CD4-positive, alpha-beta memory T cell (primary cell): ENCODE measurements at regions of chr3 and their contacts with region 1.

Region 1: GRCh38 chr3:45037734-45038455 is 11.8 kb downstream of the CLEC3B start:
- DNase-seq: peak; percentile 88 to 93 (median 91)
- H3K4me3 ChIP-seq: no peak overlapping the region
- H3K4me3 Mint-ChIP-seq: peak overlapping the region in 6 of 8 donors; percentile 54 to 86 (median 78)
- H3K27ac ChIP-seq: no peak overlapping the region
- H3K27ac Mint-ChIP-seq: peak overlapping the region in 3 of 7 donors; percentile 51 to 78 (median 72)
- H3K4me1 ChIP-seq: peaks cover 32% of the 10 kb centered on the region
- H3K4me1 Mint-ChIP-seq: peaks cover 24 to 66% (median 43%) of the 10 kb centered on the region in 4 donors
- H3K27me3 ChIP-seq: no peaks in the 10 kb centered on the region
- H3K27me3 Mint-ChIP-seq: peaks cover 10 to 34% of the 10 kb centered on the region in 2 donors

Region 2: DNA sequence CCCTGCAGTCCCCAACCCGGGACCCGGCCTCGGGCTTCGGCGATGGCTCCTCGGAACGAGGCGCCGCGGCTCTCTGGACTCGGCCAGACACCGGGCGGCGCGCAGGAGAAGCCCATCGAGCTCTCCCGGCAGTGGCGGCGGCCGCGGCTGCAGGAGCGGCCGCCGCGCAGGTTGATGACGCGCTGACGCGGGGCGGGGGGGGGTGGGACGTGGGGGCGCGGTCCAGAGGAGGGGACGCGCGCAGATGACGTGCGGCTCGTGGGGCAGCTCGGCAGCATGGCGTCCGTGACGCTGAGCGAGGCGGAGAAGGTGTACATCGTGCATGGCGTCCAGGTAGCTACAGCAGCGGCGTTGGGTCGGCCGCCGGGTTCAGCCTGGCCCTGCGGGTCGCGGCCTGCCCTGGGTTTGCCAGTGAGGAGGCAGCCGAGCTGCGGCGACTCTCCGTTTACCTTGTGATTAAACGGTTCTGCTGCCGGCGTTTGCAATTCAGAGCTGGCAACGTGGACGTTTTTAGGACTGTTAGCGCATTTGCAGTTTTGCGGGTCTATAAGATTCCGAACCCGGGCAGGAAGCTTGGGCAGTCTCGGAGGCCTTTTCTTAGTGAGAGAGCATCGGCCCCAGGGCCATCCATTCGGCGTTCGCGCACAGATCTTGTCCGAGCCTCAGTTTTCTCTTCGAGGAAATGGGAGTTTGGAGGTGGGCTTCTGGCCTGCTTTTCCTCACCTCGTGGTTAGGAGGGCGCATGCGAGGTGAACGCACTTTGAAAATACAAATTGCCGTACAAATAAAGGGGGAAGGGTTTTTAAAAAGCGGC is 61.7 kb before region 1 on chr3 and contains the starts of genes EXOSC7 and ZDHHC3:
- CTCF ChIA-PET with region 1: interaction called, 14 read pairs
- POLR2A ChIA-PET with region 1: interaction called, 20 read pairs
- intact Hi-C with region 1: loop called (anchors 5 kb)
- DNase-seq: peak; percentile 81 to 89 (median 88)
- H3K4me3 ChIP-seq: peak within 1 kb of the TSS; percentile 85 to 94
- H3K4me3 Mint-ChIP-seq: peak within 1 kb of the TSS; percentile 93 to 97 (median 95)
- H3K27ac ChIP-seq: peak within 1 kb of the TSS; percentile 91
- H3K27ac Mint-ChIP-seq: peak within 1 kb of the TSS; percentile 95 to 97 (median 96)
- H3K4me1 ChIP-seq: peaks cover 55% of the 10 kb centered on the region
- H3K4me1 Mint-ChIP-seq: peaks cover 42 to 75% (median 60%) of the 10 kb centered on the region in 4 donors
- H3K27me3 ChIP-seq: no peaks in the 10 kb centered on the region
- H3K27me3 Mint-ChIP-seq: no peaks in the 10 kb centered on the region
- total RNA-seq, gene EXOSC7: 44.6 to 45.3 TPM
- total RNA-seq, gene ZDHHC3: 40.1 to 41.9 TPM

Region 3: DNA sequence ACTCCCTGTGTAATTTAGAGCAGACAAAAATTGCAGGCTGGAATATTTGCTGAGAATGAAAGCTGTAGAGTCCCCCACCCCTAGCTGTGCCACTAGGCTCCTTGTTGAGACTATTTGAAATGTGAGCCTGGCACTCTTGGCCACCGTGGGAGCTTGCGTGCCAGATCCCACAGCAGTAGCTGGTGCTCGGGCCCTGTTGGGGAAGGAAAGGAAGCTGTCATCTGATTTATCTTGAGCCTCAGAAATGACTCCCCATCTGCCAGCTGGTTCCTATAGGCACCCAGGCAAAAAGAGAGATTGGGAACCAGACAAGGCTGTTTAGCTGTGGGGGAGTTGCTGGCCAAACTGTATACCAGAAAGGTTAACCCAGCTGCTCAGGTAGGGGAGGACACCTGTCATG is 35.2 kb before region 1 on chr3:
- CTCF ChIA-PET with region 1: interaction called, 20 read pairs
- POLR2A ChIA-PET with region 1: interaction called, 10 read pairs
- intact Hi-C with region 1: no loop called
- DNase-seq: no peak
- H3K4me3 ChIP-seq: no peak overlapping the region
- H3K4me3 Mint-ChIP-seq: no peak overlapping the region
- H3K27ac ChIP-seq: no peak overlapping the region
- H3K27ac Mint-ChIP-seq: peak overlapping the region; percentile 23 to 82 (median 73)
- H3K4me1 ChIP-seq: peaks cover 21% of the 10 kb centered on the region
- H3K4me1 Mint-ChIP-seq: peaks cover 19 to 45% (median 28%) of the 10 kb centered on the region in 4 donors
- H3K27me3 ChIP-seq: no peaks in the 10 kb centered on the region
- H3K27me3 Mint-ChIP-seq: no peaks in the 10 kb centered on the region

Region 4: DNA sequence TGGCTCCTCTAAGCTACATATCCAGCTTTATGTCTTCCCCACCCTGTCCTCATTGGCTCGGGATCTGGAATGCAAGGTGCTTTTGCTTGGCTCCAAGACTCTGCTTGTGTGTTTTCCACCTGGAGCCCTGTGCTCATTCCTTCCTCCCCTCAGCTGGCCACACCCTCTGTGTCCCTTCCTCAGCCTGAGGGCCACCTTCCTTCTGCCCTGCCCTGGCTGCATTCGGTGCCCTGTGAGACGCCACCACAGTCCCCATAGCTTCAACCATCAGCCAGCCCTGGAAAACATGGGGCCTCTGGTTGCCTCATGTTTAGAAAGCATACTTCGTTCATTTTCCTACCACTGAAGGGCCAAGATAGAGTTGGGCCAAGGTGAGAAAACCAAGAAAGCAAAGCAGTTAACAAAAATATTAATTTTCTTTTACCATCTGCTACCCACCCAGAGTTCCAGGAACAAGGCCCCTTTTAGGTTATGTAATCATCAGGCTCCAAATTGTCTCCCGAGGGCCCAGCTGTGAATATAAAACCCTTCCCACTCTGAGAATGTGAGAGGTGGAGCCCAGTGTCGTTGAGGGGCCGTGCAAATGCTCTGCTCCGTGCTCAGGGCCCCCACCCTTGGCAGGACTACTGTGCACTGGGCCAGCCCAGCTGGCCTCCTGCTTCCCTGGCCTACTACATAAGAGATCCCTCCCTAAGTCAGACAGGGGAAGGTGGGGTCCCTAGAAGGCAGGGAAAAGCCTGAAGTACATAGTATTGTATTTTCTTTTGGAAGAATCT is 16.6 kb before region 1 on chr3:
- CTCF ChIA-PET with region 1: interaction called, 16 read pairs
- POLR2A ChIA-PET with region 1: interaction called, 8 read pairs
- intact Hi-C with region 1: no loop called
- DNase-seq: no peak
- H3K4me3 ChIP-seq: no peak overlapping the region
- H3K4me3 Mint-ChIP-seq: peak overlapping the region in 3 of 8 donors; percentile 10 to 54 (median 28)
- H3K27ac ChIP-seq: no peak overlapping the region
- H3K27ac Mint-ChIP-seq: peak overlapping the region in 6 of 7 donors; percentile 50 to 89 (median 84)
- H3K4me1 ChIP-seq: peaks cover 16% of the 10 kb centered on the region
- H3K4me1 Mint-ChIP-seq: peaks cover 13 to 31% (median 21%) of the 10 kb centered on the region in 4 donors
- H3K27me3 ChIP-seq: no peaks in the 10 kb centered on the region
- H3K27me3 Mint-ChIP-seq: no peaks in the 10 kb centered on the region

Region 5: GRCh38 chr3:45210308-45211041 is 172.6 kb after region 1 on chr3:
- CTCF ChIA-PET with region 1: interaction called, 688 read pairs
- POLR2A ChIA-PET with region 1: interaction called, 40 read pairs
- intact Hi-C with region 1: loop called (anchors 1 kb)
- DNase-seq: peak; percentile 73 to 82 (median 76)
- H3K4me3 ChIP-seq: no peak overlapping the region
- H3K4me3 Mint-ChIP-seq: peak overlapping the region in 2 of 8 donors; percentile 21 to 29
- H3K27ac ChIP-seq: no peak overlapping the region
- H3K27ac Mint-ChIP-seq: peak overlapping the region in 2 of 7 donors; percentile 6 to 77
- H3K4me1 ChIP-seq: peaks cover 22% of the 10 kb centered on the region
- H3K4me1 Mint-ChIP-seq: peaks cover 9 to 28% (median 20%) of the 10 kb centered on the region in 4 donors
- H3K27me3 ChIP-seq: peaks cover 5% of the 10 kb centered on the region
- H3K27me3 Mint-ChIP-seq: peaks cover 0 to 9% of the 10 kb centered on the region in 2 donors

Region 6: GRCh38 chr3:45499529-45499928 is 461.6 kb after region 1 on chr3:
- CTCF ChIA-PET with region 1: interaction called, 19 read pairs
- POLR2A ChIA-PET with region 1: no interaction called
- intact Hi-C with region 1: loop called (anchors 1 kb)
- DNase-seq: peak in 1 of 5 donors; percentile 17
- H3K4me3 ChIP-seq: no peak overlapping the region
- H3K4me3 Mint-ChIP-seq: no peak overlapping the region
- H3K27ac ChIP-seq: no peak overlapping the region
- H3K27ac Mint-ChIP-seq: no peak overlapping the region
- H3K4me1 ChIP-seq: no peaks in the 10 kb centered on the region
- H3K4me1 Mint-ChIP-seq: peaks cover 2 to 5% (median 4%) of the 10 kb centered on the region in 4 donors
- H3K27me3 ChIP-seq: no peaks in the 10 kb centered on the region
- H3K27me3 Mint-ChIP-seq: no peaks in the 10 kb centered on the region

Region 7: DNA sequence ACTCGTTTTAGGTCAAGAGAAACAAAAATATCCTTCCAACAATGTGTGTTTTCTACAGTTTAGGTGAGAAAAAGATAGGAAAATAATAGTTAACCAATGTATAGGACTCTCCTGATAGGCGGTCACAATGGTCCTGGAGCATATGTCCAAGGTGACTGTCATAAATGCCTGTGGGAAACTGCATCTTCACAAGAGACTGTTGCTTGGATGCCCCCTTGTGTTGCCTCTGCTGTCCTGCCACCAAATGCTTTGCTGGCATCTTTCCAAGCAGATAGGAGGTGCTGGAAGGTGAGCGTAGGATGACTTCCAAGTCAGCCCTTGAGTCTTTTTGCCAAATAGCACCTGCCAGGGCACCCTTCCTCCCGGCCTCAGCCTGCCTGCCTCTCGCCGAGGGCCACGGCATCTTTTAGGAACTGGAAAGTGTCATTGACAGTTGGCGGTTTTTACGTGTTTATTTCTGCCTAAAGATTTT is 627.2 kb after region 1 on chr3:
- CTCF ChIA-PET with region 1: interaction called, 80 read pairs
- POLR2A ChIA-PET with region 1: no interaction called
- intact Hi-C with region 1: loop called (anchors 2 kb)
- DNase-seq: peak; percentile 76 to 84 (median 79)
- H3K4me3 ChIP-seq: peak overlapping the region; percentile 70
- H3K4me3 Mint-ChIP-seq: peak overlapping the region; percentile 87 to 98 (median 92)
- H3K27ac ChIP-seq: peak overlapping the region; percentile 66
- H3K27ac Mint-ChIP-seq: peak overlapping the region; percentile 89 to 98 (median 95)
- H3K4me1 ChIP-seq: peaks cover 22% of the 10 kb centered on the region
- H3K4me1 Mint-ChIP-seq: peaks cover 15 to 36% (median 25%) of the 10 kb centered on the region in 4 donors
- H3K27me3 ChIP-seq: no peaks in the 10 kb centered on the region
- H3K27me3 Mint-ChIP-seq: no peaks in the 10 kb centered on the region